ENCODE measurements at regions of chr1 and their contacts with region 1.

Region 1: DNA sequence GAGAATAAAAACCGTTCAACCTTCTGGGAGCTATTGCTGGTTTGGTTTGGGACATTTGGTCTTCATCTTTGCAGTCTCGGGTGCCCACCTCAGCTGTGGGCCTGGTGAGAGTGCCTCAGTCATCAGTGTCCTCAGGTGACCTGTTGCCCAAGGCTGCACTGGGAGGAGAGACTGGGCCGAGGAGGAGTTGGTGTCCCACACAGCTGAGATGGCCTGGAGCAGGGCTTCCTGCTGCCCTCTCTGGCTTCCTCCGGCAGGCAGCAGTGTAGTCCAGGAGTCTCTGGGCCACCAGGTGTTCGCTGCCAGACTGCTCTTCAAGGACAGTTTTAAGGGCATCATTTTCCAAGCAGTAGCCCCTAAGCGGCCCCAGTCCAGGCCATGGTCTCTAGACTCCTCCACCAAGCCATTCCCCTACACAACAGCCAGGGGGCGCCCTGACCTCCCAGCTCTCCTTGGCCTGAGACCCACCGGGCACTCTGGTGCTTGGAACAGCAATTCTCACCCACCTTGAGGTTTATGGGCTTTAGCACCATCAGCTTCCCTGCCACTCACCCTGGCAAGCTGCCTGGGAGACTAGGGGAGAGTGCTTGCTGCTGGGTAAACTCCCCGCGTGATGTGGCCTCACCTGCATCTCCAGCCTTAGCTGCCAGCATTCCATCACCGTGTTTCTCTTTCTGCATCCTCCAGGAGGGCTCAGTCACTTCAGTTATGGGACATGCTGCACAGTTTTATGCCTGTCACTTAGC is 9.1 kb upstream of the SYTL1 start:
- DNase-seq: peak; percentile 83

Region 2: GRCh38 chr1:27216466-27216865 is 116.2 kb before region 1 on chr1:
- CTCF ChIA-PET with region 1: no interaction called
- POLR2A ChIA-PET with region 1: no interaction called
- DNase-seq: no peak

Region 3: GRCh38 chr1:27275696-27276095 is 57.0 kb before region 1 on chr1:
- CTCF ChIA-PET with region 1: no interaction called
- POLR2A ChIA-PET with region 1: no interaction called
- DNase-seq: no peak

Region 4: DNA sequence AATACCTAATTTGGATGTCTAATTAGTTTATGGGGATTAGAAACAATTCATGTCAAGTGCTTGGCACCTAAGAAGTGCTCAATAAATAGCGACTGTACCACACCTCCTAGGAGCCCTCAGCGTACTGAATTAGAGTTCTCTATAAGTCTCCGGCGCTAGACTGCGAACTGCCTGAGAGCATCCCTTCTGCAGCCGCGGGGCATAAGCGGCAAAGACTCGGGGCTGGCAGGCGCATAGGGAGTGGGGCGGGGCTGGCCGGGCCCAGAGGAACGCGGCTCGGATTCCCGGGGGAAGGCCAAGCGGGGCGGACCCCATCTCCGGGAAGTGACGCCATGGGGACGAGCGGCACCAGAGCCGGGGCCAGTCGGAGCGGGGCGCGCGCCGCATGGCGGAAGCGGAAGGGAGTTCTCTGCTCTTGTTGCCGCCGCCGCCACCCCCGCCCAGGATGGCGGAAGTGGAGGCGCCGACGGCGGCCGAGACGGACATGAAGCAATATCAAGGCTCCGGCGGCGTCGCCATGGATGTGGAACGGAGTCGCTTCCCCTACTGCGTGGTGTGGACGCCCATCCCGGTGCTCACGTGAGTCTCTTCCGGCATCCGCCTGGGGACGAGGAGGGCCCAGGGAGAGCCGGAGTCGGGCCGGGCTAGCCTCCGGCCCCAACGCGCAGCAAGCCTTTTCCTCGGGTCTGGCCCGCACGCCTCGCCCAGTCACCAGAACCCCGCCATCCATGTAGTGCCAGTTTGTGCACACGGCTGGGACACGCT is 10.7 kb before region 1 on chr1 and contains the start of gene TMEM222:
- CTCF ChIA-PET with region 1: interaction called, 4 read pairs
- POLR2A ChIA-PET with region 1: interaction called, 10 read pairs
- DNase-seq: peak; percentile 98

Measured in HEK293T (cell line).